ENCODE measurements at regions of chr3 and their contacts with region 1.

Region 1: GRCh38 chr3:23923786-23924185 is 6.9 kb downstream of the RPL15 start:
- DNase-seq: no peak
- ATAC-seq: no peak
- H3K4me3 ChIP-seq: no peak overlapping the region
- H3K27ac ChIP-seq: no peak overlapping the region
- H3K4me1 ChIP-seq: no peaks in the 10 kb centered on the region
- H3K27me3 ChIP-seq: no peaks in the 10 kb centered on the region

Region 2: GRCh38 chr3:23685484-23686258 is 238.1 kb before region 1 on chr3:
- intact Hi-C with region 1: no loop called
- DNase-seq: peak; percentile 84 to 89
- ATAC-seq: peak; percentile 89
- H3K4me3 ChIP-seq: no peak overlapping the region
- H3K27ac ChIP-seq: peak overlapping the region in 1 of 2 donors; percentile 7
- H3K4me1 ChIP-seq: peaks cover 0 to 6% of the 10 kb centered on the region in 2 donors
- H3K27me3 ChIP-seq: no peaks in the 10 kb centered on the region

Region 3: GRCh38 chr3:23888617-23889228 is 35.1 kb before region 1 on chr3:
- intact Hi-C with region 1: no loop called
- DNase-seq: no peak
- ATAC-seq: no peak
- H3K4me3 ChIP-seq: no peak overlapping the region
- H3K27ac ChIP-seq: no peak overlapping the region
- H3K4me1 ChIP-seq: no peaks in the 10 kb centered on the region
- H3K27me3 ChIP-seq: no peaks in the 10 kb centered on the region

Region 4: DNA sequence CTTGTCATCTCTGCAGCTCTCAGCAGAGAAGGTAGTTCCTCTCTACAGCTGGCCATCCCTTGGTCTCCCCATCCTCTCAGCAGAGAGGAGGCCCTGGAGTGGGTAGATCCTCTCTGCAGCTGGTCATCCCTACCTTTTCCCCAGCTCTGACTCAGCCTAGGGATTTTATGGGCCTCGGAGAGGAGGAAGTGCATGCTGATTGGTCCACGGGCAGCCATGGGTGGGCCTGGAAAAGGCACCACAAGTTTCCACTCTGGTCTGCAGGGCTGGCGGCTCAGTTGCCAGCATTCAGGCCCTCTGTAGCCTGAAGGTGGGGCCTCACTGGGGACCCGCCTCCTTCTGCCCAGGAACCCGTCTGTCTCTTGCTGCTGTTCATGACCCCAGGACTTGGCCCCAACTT is 58.2 kb after region 1 on chr3:
- intact Hi-C with region 1: loop called in 1 of 2 experiments (anchors 10 kb)
- DNase-seq: no peak
- ATAC-seq: peak; percentile 45
- H3K4me3 ChIP-seq: no peak overlapping the region
- H3K27ac ChIP-seq: no peak overlapping the region
- H3K4me1 ChIP-seq: no peaks in the 10 kb centered on the region
- H3K27me3 ChIP-seq: no peaks in the 10 kb centered on the region

Measured in aorta (tissue), 5 donors.